K562 (cell line): ENCODE measurements at regions of chr1 and their contacts with region 1.

Region 1: DNA sequence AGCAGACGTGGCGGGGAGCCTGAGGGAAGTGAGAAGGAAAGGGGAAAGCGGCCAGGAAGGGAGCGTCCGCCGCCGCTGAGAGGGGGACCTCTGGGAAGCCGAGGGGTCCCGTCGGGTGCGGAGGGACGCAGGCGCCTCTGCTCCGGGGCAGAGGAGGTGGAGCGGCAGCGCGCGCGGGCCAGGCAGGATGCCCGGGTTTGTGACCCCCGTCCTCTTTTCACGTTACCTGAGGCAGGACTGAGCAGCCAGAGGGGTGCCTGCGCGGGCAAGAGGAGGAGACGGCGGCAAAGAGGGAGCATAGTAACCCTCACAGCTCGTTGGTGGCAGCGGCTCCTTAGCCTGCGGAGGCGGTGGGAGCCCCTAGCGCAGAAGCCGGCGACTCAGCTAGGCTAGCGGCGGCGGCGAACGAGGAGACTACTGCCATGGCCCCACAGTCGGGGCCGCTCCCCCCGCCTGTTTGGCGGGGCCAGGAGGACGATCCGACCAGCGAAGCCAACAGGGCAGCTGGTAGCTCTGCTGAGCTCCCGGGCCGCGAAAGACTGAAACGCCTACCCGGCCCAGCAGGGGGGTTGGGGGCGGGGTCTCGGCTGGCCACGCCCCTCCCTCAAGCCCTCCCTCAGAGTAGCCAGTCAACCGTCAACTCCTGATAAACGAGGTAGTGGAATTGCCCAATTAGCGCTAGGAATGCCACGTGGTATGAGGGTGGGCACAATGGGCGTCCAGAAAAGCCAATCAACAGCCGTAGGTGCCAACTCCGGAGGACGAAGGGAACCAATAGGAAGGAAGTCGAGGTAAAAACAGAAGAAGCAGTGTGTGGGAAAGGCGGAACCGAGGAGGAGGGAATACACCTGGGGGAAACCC is at the start of gene TESK2:
- DNase-seq: peak; percentile 89 to 95 (median 92)
- ATAC-seq: peak; percentile 93
- H3K4me3 ChIP-seq: peak within 1 kb of the TSS; percentile 57
- H3K27ac ChIP-seq: peak within 1 kb of the TSS; percentile 52
- H3K4me1 ChIP-seq: peaks cover 9 to 20% of the 10 kb centered on the region in 2 experiments; a peak in 4 of 5 replicates
- H3K27me3 ChIP-seq: no peaks in the 10 kb centered on the region
- CTCF ChIP-seq: 0 out of 6 replicates have a peak, but pooled peaks of 2 of the 3 experiments have one; percentile 5
- EP300 ChIP-seq: no peak
- POLR2A ChIP-seq: peak; percentile 72
- RAD21 ChIP-seq: 0 out of 4 replicates have a peak, but pooled peaks of 1 of the 2 experiments have one; percentile 7
- polyA plus RNA-seq, gene TESK2: 1.6 to 1.9 TPM

Region 2: GRCh38 chr1:44799770-44800584 is 690.9 kb before region 1 on chr1 and contains the start of gene PLK3:
- CTCF ChIA-PET with region 1: no interaction called
- POLR2A ChIA-PET with region 1: no interaction called
- in situ Hi-C with region 1: loop called (anchors 10 kb)
- intact Hi-C with region 1: no loop called
- DNase-seq: peak; percentile 92 to 99 (median 96)
- ATAC-seq: peak; percentile 93
- H3K4me3 ChIP-seq: peak within 1 kb of the TSS; percentile 77
- H3K27ac ChIP-seq: peak within 1 kb of the TSS; percentile 69
- H3K4me1 ChIP-seq: peaks cover 23 to 53% of the 10 kb centered on the region in 2 experiments
- H3K27me3 ChIP-seq: no peaks in the 10 kb centered on the region; a peak in 1 of 5 replicates
- CTCF ChIP-seq: peak; percentile 94 to 96 (median 95)
- EP300 ChIP-seq: no peak; the same call in 1 of the 2 replicates
- POLR2A ChIP-seq: peak; percentile 91
- RAD21 ChIP-seq: peak; percentile 91 to 96
- polyA plus RNA-seq, gene PLK3: 0.52 to 1.9 TPM

Region 3: GRCh38 chr1:45339789-45340570 is 150.9 kb before region 1 on chr1 and contains the starts of genes MUTYH and TOE1:
- CTCF ChIA-PET with region 1: interaction called, 7 read pairs
- POLR2A ChIA-PET with region 1: interaction called, 7 read pairs
- in situ Hi-C with region 1: loop called (anchors 5 kb)
- intact Hi-C with region 1: loop called (anchors 5 kb)
- DNase-seq: peak; percentile 98 to 99 (median 98)
- ATAC-seq: peak; percentile 95
- H3K4me3 ChIP-seq: peak within 1 kb of the TSS; percentile 66
- H3K27ac ChIP-seq: peak within 1 kb of the TSS; percentile 94
- H3K4me1 ChIP-seq: peaks cover 6 to 18% of the 10 kb centered on the region in 2 experiments; a peak in 4 of 5 replicates
- H3K27me3 ChIP-seq: no peaks in the 10 kb centered on the region
- CTCF ChIP-seq: no peak
- EP300 ChIP-seq: no peak; the same call in 1 of the 2 replicates
- POLR2A ChIP-seq: peak; percentile 99
- RAD21 ChIP-seq: no peak; a peak in 1 of 4 replicates
- polyA plus RNA-seq, gene MUTYH: 3.4 to 6.2 TPM
- polyA plus RNA-seq, gene TOE1: 59.8 to 85.7 TPM

Region 4: DNA sequence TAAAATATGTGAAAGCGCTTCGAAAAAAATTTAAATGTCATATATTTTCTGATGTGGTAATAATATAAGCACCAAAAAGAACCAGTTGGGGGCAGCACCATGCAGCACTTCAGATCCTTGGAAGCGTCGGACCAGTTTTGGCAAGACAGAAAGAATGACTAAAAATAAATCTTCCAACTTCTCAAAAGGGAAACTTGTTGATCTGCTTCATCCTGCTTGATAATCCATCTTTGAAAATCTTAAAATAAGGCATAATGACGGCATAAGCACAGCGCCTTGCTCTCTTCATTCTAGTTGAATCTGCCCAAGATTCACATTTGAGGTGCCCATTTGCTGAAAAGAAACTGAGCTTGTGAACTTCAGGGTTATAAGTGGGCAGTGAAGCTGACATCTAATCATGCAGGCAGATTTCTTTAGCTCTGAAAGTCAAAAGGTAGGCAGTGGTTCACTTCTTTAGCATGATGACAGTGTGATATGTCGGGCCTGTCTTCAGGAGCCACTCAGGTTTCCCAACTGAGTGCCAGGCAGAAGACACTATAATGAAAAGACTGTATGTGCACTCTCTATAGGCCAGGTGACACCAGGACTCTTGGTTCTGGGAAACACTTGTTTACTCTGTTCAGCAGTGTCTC is 130.9 kb before region 1 on chr1:
- CTCF ChIA-PET with region 1: interaction called, 106 read pairs
- POLR2A ChIA-PET with region 1: interaction called, 4 read pairs
- in situ Hi-C with region 1: no loop called
- intact Hi-C with region 1: loop called (anchors 1 kb)
- DNase-seq: peak; percentile 28 to 80 (median 38)
- ATAC-seq: peak; percentile 84
- H3K4me3 ChIP-seq: no peak overlapping the region
- H3K27ac ChIP-seq: no peak overlapping the region
- H3K4me1 ChIP-seq: peaks cover 0 to 3% of the 10 kb centered on the region in 2 experiments; a peak in 2 of 5 replicates
- H3K27me3 ChIP-seq: no peaks in the 10 kb centered on the region
- CTCF ChIP-seq: peak; percentile 74 to 96 (median 78)
- EP300 ChIP-seq: no peak
- POLR2A ChIP-seq: no peak
- RAD21 ChIP-seq: peak; percentile 93 to 98